ENCODE measurements at regions of chr14 and their contacts with region 1.

Region 1: DNA sequence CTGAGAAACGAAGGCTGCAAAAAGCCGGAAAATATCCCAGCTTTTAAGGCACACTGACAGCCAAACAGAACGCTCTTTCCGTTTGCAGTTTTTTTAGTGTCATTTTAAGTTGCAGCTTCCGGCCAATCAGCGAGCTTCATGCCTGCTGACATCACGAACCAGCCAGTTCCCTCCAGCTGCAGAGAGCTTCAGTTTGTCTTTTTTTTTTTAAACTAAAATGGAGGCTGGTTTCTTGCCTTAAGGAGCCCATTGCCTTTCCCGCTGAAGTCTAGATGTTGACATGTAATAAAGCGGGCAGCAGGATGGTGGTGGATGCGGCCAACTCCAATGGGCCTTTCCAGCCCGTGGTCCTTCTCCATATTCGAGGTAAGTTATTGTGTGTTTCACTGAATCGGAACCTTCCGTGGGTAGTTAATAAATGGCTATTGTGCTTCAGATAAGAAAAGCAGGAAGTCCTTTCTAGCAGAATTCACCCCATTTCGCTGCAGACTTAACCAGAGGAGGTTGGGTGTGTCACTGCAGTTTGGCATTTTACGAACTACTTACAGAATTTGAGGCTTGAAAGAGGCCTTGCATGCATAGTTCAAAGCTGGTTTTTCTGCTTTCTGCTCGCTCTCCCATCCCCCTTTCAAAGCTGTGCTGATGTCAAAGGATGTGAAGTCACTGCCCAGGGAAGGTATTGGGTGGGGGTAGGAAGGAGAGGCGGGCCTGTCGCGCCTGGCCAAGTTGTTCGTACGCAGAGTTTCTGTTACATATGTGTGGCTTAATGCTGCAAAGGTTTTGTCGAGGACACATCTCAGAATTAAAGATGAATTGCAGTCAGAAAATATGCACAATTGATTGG is 48.4 kb downstream of the PPP2R5C start:
- DNase-seq: peak; percentile 73 to 97 (median 81)
- ATAC-seq: peak; percentile 84
- H3K4me3 ChIP-seq: peak overlapping the region; percentile 79
- H3K4me3 Mint-ChIP-seq: peak overlapping the region; percentile 94
- H3K27ac ChIP-seq: peak overlapping the region; percentile 99
- H3K27ac Mint-ChIP-seq: peak overlapping the region; percentile 98
- H3K4me1 ChIP-seq: peaks cover 39% of the 10 kb centered on the region
- H3K4me1 Mint-ChIP-seq: peaks cover 56% of the 10 kb centered on the region
- H3K27me3 ChIP-seq: no peaks in the 10 kb centered on the region
- H3K27me3 Mint-ChIP-seq: no peaks in the 10 kb centered on the region
- CTCF ChIP-seq: no peak

Region 2: DNA sequence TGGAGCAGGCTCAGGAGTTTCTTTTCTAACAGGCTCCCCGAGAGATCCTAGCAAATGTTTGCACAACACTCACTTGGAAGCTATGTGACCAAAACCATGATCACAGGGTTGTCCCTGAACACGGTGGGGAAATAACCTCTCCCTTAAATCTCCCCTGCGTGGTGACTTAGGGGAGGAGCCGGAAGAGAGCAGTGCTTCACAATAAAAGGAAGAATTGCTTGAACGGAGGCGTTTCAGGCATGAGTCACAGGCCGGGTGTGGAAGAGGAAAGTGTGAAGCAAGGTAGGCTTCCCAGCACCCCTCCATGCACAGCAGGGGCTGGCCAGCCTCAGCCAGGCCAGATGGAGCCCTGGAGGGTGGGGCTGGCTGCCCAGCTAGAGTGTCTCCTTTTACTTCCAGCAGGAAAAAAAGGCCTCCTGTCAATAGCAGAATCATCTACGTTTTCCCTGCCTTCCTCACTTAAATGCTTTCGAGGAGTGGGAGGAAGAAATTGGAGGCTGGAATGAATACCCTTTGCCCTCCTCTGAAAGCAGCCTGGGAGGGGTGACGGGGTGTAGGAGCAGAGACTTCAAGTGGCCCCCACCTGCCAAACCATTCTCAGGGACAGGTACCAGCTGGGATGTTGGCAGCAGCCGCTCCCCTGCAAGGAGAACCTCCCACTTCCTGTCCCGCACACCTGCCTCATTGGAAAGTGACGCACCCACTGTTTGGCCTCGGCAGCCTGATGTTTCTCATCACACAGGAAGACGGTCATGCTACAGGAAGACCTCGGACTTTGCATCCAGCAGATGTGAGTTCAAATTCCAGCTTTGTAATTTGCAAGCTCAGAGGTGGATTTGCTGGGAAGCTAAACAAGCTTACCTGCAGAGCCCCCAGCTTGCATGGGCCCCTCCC is 78.5 kb before region 1 on chr14:
- CTCF ChIA-PET with region 1: no interaction called
- POLR2A ChIA-PET with region 1: interaction called, 23 read pairs
- intact Hi-C with region 1: no loop called
- DNase-seq: peak; percentile 53 to 94 (median 78)
- ATAC-seq: peak; percentile 90
- H3K4me3 ChIP-seq: peak overlapping the region; percentile 36
- H3K4me3 Mint-ChIP-seq: peak overlapping the region; percentile 73
- H3K27ac ChIP-seq: peak overlapping the region; percentile 87 to 88
- H3K27ac Mint-ChIP-seq: peak overlapping the region; percentile 100
- H3K4me1 ChIP-seq: peaks cover 26% of the 10 kb centered on the region
- H3K4me1 Mint-ChIP-seq: peaks cover 47% of the 10 kb centered on the region
- H3K27me3 ChIP-seq: no peaks in the 10 kb centered on the region
- H3K27me3 Mint-ChIP-seq: no peaks in the 10 kb centered on the region
- CTCF ChIP-seq: no peak

Region 3: DNA sequence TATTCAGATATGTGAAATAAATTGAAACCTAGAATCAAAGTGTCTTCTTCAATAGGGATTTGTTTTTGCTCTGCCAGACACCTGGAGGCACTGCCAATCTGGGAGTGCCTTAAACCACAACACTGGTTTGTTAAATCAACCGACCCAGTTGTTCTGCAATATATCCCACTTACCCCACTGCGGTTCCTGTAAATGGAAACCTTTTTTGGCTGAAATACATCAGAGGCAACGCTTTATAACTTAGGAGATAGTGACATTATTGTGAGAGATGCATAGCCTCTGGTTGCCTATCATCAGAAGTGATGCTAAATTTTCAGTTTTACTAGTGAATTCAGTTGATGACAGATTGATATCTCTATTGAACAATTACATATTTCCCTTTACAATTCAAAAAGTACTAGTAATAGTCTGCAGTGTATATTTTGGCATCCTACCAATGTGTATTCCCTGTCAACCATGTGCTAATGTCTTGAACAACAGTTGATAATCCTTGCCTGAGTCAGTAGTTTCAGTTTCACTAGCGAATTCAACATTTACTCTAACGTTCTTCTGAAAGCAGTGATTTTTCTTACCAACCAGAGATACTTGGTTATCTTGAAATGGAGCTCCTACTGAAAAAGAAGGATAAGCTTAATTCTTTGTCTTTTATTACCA is 17.8 kb before region 1 on chr14:
- CTCF ChIA-PET with region 1: interaction called, 4 read pairs
- POLR2A ChIA-PET with region 1: interaction called, 68 read pairs
- intact Hi-C with region 1: loop called in 1 of 2 experiments (anchors 2 kb)
- DNase-seq: peak in 3 of 14 experiments; percentile 56 to 72 (median 64)
- ATAC-seq: peak; percentile 84
- H3K4me3 ChIP-seq: peak overlapping the region; percentile 40
- H3K4me3 Mint-ChIP-seq: peak overlapping the region; percentile 84
- H3K27ac ChIP-seq: peak overlapping the region in 1 of 2 donors; percentile 60
- H3K27ac Mint-ChIP-seq: peak overlapping the region; percentile 76
- H3K4me1 ChIP-seq: peaks cover 12% of the 10 kb centered on the region
- H3K4me1 Mint-ChIP-seq: peaks cover 36% of the 10 kb centered on the region
- H3K27me3 ChIP-seq: no peaks in the 10 kb centered on the region
- H3K27me3 Mint-ChIP-seq: no peaks in the 10 kb centered on the region
- CTCF ChIP-seq: no peak

Region 4: DNA sequence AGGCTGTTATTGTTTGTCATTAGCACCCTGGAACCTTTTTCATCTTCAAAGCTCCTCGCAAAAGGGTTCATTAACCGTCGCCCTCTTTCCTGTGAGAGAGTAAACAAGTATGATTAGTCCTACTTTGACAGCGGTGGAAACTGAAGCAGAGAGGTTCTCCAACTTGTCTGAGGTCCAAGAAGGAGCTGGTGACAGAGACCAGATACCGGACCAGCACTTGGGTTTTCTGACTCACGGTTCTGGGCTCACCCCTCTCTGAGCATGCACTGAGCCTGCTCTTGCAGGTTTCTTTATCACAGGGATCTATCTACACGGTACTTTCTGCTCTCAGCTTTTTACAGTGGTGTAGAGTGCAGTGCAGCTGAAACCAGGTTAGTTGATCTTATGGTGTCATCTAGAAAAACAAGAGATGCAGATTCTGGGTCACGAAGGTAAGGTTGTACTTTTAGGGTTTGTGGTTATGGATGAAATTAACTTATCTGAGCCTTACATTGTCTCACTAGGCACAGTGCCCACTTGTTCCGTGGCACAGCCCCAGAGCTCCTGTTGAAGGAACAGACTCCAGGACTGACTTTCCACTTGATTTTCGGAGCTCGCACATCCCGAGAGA is 13.7 kb after region 1 on chr14:
- CTCF ChIA-PET with region 1: interaction called, 33 read pairs
- POLR2A ChIA-PET with region 1: interaction called, 697 read pairs
- intact Hi-C with region 1: loop called (anchors 1 kb)
- DNase-seq: peak; percentile 50 to 91 (median 66)
- ATAC-seq: peak; percentile 61
- H3K4me3 ChIP-seq: peak overlapping the region; percentile 76
- H3K4me3 Mint-ChIP-seq: peak overlapping the region; percentile 90
- H3K27ac ChIP-seq: peak overlapping the region; percentile 98 to 99
- H3K27ac Mint-ChIP-seq: peak overlapping the region; percentile 98
- H3K4me1 ChIP-seq: peaks cover 79% of the 10 kb centered on the region
- H3K4me1 Mint-ChIP-seq: peaks cover 89% of the 10 kb centered on the region
- H3K27me3 ChIP-seq: no peaks in the 10 kb centered on the region
- H3K27me3 Mint-ChIP-seq: no peaks in the 10 kb centered on the region
- CTCF ChIP-seq: no peak

Region 5: GRCh38 chr14:101843665-101844064 is 33.8 kb after region 1 on chr14:
- CTCF ChIA-PET with region 1: interaction called, 8 read pairs
- POLR2A ChIA-PET with region 1: interaction called, 28 read pairs
- intact Hi-C with region 1: loop called in 1 of 2 experiments (anchors 5 kb)
- DNase-seq: peak in 12 of 14 experiments; percentile 29 to 88 (median 50)
- ATAC-seq: peak; percentile 79
- H3K4me3 ChIP-seq: no peak overlapping the region
- H3K4me3 Mint-ChIP-seq: peak overlapping the region; percentile 26
- H3K27ac ChIP-seq: peak overlapping the region in 1 of 2 donors; percentile 48
- H3K27ac Mint-ChIP-seq: peak overlapping the region; percentile 78
- H3K4me1 ChIP-seq: peaks cover 88% of the 10 kb centered on the region
- H3K4me1 Mint-ChIP-seq: peaks cover 87% of the 10 kb centered on the region
- H3K27me3 ChIP-seq: no peaks in the 10 kb centered on the region
- H3K27me3 Mint-ChIP-seq: no peaks in the 10 kb centered on the region
- CTCF ChIP-seq: peak; percentile 69

Region 6: GRCh38 chr14:101876555-101876938 is 66.7 kb after region 1 on chr14:
- CTCF ChIA-PET with region 1: no interaction called
- POLR2A ChIA-PET with region 1: interaction called, 14 read pairs
- intact Hi-C with region 1: no loop called
- DNase-seq: peak; percentile 34 to 92 (median 64)
- ATAC-seq: peak; percentile 93
- H3K4me3 ChIP-seq: peak overlapping the region; percentile 27
- H3K4me3 Mint-ChIP-seq: peak overlapping the region; percentile 61
- H3K27ac ChIP-seq: peak overlapping the region; percentile 56 to 64
- H3K27ac Mint-ChIP-seq: peak overlapping the region; percentile 79
- H3K4me1 ChIP-seq: peaks cover 60% of the 10 kb centered on the region
- H3K4me1 Mint-ChIP-seq: peaks cover 78% of the 10 kb centered on the region
- H3K27me3 ChIP-seq: no peaks in the 10 kb centered on the region
- H3K27me3 Mint-ChIP-seq: no peaks in the 10 kb centered on the region
- CTCF ChIP-seq: no peak

Measured in CD4-positive, alpha-beta T cell (primary cell).